Activated T-helper 1 cell treated with anti-CD3 and anti-CD28 coated beads, Interleukin-12 subunit alpha, Interleukin-12 subunit beta, Interleukin-2, Interleukin-4 antibody, amounts not matched to agents 30 ng/mL and 10 ng/mL and 1 ng/mL, durations not matched to agents 14 hours and 24 hours and 36 hours (primary cell): ENCODE measurements at regions of chr19 and their contacts with region 1.

Region 1: DNA sequence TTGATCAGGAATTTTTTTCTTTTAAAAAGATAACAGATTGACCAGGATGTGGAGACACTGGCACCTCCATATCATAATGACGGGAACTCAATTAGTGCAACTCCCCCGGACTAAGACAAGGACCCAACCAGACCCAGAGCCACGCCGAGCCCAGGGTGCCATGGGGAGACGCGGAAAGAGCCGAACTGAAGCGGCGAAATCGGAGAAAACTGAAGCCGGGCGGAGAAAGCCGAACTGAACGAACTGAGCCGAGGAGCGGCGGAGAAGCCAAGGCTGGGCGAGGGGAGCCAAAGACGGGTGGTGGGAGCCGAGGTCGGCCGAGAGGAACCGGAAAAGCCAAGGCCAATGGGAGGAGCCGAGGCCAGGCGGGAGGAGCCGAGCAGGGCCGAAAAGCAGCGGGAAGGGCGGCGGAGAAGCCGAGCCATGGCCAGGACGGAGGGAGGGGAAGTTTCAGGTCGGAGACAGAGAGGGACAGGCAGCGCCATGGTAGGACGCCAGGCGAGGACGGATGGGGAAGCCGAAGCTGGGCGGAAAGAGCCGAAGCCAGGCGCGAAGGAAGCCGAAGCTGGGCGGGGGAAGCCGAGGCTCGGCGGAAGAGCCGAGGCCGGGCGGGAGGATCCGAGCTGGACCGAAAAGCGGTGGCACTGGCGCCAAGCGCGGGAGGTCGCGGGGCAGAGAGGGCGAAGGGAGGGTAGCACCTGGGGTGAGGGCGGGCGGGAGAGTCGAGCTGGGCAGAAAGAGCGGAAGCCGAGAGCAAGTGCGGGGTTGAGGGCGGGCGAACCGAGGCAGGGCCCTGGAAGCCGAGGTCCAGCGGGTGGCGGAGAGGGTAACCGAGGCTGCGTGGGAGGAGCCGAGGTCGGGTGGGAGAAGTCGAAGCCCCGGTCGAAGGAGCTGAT is 29.4 kb downstream of the ZNF557 start:
- DNase-seq: peak; percentile 84
- H3K4me3 Mint-ChIP-seq: peak overlapping the region; percentile 88
- H3K27ac Mint-ChIP-seq: peak overlapping the region; percentile 85
- H3K4me1 Mint-ChIP-seq: peaks cover 13% of the 10 kb centered on the region
- H3K27me3 Mint-ChIP-seq: peaks cover 4% of the 10 kb centered on the region

Region 2: DNA sequence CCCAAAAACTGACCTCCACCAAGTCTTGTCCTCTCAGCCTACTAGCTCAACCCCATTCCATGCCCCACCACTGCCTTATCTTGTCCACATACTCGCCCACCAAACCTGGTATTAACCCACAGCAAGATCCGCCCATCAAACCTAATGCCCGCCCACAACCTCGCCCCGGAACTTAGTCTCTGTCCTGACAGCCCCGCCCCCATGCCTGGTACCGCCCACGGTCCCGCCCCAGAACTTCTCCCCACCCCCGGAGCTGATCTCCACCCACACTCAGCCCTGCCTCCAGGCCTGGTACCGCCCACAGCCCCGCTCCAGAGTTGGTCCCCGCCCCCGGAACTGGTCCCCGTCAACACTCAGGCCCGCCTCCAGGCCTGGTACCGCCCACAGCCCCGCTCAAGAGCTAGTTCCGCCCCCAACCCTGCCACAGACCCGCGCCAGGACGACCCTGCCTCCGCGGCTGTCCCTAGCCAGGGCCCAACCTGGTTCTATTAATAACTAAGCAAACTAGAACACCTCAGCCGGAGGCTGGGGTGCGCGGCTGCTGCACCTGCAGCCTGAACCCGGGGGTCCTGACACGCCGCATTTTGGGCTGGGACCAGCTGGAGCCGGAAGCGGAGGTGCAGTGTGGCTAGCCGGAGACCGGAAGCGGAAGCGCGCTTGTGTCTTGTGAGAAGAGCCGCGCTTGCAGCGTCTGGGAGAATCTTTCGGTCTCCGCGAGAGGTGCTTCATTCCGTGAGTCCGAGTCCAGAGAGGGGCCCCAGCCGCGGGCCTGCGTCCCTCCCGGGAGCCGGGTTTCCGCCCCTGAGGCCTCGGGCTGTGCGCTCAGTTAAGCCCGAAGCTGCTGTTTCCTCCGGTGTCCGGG is 29.7 kb before region 1 on chr19 and contains the start of gene ZNF557:
- intact Hi-C with region 1: loop called (anchors 1 kb)
- DNase-seq: peak; percentile 97
- H3K4me3 Mint-ChIP-seq: peak within 1 kb of the TSS; percentile 96
- H3K27ac Mint-ChIP-seq: peak within 1 kb of the TSS; percentile 94
- H3K4me1 Mint-ChIP-seq: peaks cover 12% of the 10 kb centered on the region
- H3K27me3 Mint-ChIP-seq: no peaks in the 10 kb centered on the region
- total RNA-seq, gene ZNF557: 12.2 and 13.3 TPM in 2 replicates

Region 3: DNA sequence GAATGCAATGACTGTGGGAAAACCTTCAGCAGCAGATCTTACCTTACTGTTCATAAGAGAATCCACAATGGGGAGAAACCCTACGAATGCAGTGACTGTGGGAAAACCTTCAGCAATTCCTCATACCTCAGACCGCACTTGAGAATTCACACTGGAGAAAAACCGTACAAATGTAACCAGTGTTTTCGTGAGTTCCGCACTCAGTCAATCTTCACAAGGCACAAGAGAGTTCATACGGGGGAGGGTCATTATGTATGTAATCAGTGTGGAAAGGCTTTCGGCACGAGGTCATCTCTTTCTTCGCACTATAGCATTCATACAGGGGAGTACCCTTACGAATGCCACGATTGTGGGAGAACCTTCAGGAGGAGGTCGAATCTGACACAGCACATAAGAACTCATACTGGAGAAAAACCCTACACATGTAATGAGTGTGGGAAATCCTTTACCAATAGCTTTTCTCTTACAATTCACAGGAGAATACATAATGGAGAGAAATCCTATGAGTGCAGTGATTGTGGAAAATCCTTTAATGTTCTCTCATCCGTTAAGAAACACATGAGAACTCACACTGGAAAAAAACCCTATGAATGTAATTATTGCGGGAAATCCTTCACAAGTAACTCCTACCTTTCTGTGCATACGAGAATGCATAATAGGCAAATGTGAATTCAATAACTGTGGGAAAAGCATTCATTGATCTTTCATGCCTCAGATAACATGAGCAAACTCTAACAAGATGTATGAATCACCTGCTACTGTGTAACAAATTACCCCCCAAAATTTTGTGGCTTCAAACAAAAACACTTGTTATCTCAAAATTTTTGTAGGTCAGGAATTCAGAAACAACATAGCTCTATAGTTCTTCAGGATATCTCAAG is 15.6 kb before region 1 on chr19:
- intact Hi-C with region 1: loop called (anchors 2 kb)
- DNase-seq: no peak
- H3K4me3 Mint-ChIP-seq: no peak overlapping the region
- H3K27ac Mint-ChIP-seq: no peak overlapping the region
- H3K4me1 Mint-ChIP-seq: no peaks in the 10 kb centered on the region
- H3K27me3 Mint-ChIP-seq: no peaks in the 10 kb centered on the region

Region 4: GRCh38 chr19:7145494-7146485 is 46.8 kb after region 1 on chr19:
- intact Hi-C with region 1: no loop called
- DNase-seq: no peak
- H3K4me3 Mint-ChIP-seq: no peak overlapping the region
- H3K27ac Mint-ChIP-seq: no peak overlapping the region
- H3K4me1 Mint-ChIP-seq: no peaks in the 10 kb centered on the region
- H3K27me3 Mint-ChIP-seq: peaks cover 4% of the 10 kb centered on the region

Region 5: DNA sequence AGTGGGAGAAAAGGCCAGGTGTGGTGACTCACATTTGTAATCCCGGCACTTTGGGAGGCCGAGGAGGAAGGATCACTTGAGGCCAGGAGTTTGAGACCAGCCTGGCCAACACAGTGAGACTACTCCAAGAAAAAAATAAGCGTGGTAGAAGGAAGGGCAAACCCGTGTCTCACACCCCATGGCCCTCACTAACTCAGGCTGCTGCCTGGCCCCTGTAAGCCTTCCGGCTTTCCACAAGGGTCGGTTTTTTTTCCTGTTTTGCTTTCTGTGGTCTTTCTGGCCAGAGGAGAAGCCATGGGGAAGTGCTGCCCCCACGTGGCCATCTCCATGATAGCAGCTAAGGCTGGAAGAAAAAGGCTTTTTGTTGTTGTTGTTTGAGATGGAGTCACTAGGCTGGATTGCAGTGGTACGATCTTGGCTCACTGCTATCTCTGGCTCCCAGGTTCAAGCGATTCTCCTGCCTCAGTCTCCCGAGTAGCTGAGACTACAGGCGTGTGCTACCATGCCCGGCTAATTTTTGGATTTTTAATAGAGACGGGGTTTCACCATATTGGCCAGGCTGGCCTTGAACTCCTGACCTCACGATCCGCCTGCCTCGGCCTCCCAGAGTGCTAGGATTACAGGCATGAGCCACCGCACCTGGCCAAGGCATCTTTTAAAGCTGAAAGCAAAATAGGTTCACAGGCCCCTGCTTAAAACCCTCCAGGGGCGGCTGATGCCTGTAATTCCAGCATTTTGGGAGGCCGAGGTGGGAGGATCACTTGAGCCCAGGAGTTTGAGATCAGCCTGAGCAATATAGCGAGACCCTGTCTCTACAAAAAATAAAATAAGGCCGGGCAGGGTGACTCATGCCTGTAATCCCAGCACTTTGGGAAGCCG is 242.2 kb after region 1 on chr19:
- intact Hi-C with region 1: loop called (anchors 1 kb)
- DNase-seq: peak; percentile 70
- H3K4me3 Mint-ChIP-seq: no peak overlapping the region
- H3K27ac Mint-ChIP-seq: no peak overlapping the region
- H3K4me1 Mint-ChIP-seq: peaks cover 44% of the 10 kb centered on the region
- H3K27me3 Mint-ChIP-seq: peaks cover 5% of the 10 kb centered on the region

Region 6: GRCh38 chr19:7376151-7376852 is 277.4 kb after region 1 on chr19:
- intact Hi-C with region 1: loop called (anchors 1 kb)
- DNase-seq: no peak
- H3K4me3 Mint-ChIP-seq: no peak overlapping the region
- H3K27ac Mint-ChIP-seq: no peak overlapping the region
- H3K4me1 Mint-ChIP-seq: no peaks in the 10 kb centered on the region
- H3K27me3 Mint-ChIP-seq: no peaks in the 10 kb centered on the region

Region 7: DNA sequence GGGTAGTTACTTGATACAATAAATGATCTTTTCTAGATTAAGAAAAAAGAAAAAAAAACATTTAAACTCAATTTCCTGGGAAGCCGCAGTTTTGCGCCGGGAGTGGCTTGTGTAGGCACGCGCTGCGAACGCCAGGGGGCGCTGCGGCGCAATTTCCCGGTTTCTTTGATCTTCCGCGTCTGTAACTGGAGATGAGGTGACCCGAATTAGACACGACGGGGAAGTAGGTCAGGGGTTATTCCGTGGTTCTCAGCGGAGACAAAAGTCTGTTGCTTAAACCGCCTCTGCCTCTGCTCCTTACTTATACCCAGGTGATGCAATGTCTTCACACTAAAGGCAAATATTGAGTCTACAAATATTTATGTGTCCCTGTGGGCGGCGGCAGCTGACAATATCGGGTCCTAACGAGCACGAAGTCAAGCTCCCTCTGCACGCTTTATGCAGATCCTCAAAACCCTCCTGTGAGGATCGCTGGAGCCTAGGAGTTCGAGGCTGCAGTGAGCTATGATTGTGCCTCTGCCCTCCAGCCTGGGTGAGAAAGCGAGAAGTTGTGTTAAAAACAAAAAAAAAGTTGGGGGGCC is 553.2 kb after region 1 on chr19:
- intact Hi-C with region 1: loop called (anchors 1 kb)
- DNase-seq: peak; percentile 81
- H3K4me3 Mint-ChIP-seq: peak overlapping the region; percentile 70
- H3K27ac Mint-ChIP-seq: peak overlapping the region; percentile 52
- H3K4me1 Mint-ChIP-seq: peaks cover 13% of the 10 kb centered on the region
- H3K27me3 Mint-ChIP-seq: peaks cover 7% of the 10 kb centered on the region